Gastrocnemius medialis (tissue), 4 donors: ENCODE measurements at regions of chr22 and their contacts with region 1.

Region 1: GRCh38 chr22:40509401-40510134 is 127.0 kb downstream of the MRTFA start:
- DNase-seq: peak; percentile 29
- ATAC-seq: peak; percentile 32 to 45
- H3K4me3 ChIP-seq: no peak overlapping the region
- H3K27ac ChIP-seq: peak overlapping the region; percentile 68 to 78 (median 73)
- H3K4me1 ChIP-seq: peaks cover 56 to 59% of the 10 kb centered on the region in 2 donors
- H3K27me3 ChIP-seq: no peaks in the 10 kb centered on the region
- CTCF ChIP-seq: no peak
- POLR2A ChIP-seq: no peak

Region 2: DNA sequence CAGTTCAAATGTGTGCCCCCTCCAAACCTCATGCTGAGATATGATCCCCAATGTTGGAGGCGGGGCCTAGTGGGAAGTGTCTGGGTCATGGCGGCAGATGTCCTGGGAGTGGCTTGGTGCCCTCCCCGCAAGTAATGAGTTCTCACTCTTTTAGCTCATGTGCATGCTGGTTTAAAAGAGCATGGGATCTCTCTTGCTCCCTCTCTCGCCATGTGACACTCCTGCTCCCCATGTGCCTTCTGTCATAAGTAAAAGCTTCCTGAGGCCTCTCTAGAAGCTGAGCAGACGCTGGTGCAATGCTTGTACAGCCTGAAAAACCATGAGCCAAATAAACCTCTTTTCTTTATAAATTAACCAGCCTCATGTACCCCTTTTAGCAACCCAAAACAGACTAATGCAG is 40.4 kb before region 1 on chr22:
- in situ Hi-C with region 1: no loop called
- intact Hi-C with region 1: loop called (anchors 2 kb)
- DNase-seq: no peak
- ATAC-seq: no peak
- H3K4me3 ChIP-seq: no peak overlapping the region
- H3K27ac ChIP-seq: no peak overlapping the region
- H3K4me1 ChIP-seq: peaks cover 5 to 10% of the 10 kb centered on the region in 2 donors
- H3K27me3 ChIP-seq: no peaks in the 10 kb centered on the region
- CTCF ChIP-seq: no peak
- POLR2A ChIP-seq: no peak

Region 3: DNA sequence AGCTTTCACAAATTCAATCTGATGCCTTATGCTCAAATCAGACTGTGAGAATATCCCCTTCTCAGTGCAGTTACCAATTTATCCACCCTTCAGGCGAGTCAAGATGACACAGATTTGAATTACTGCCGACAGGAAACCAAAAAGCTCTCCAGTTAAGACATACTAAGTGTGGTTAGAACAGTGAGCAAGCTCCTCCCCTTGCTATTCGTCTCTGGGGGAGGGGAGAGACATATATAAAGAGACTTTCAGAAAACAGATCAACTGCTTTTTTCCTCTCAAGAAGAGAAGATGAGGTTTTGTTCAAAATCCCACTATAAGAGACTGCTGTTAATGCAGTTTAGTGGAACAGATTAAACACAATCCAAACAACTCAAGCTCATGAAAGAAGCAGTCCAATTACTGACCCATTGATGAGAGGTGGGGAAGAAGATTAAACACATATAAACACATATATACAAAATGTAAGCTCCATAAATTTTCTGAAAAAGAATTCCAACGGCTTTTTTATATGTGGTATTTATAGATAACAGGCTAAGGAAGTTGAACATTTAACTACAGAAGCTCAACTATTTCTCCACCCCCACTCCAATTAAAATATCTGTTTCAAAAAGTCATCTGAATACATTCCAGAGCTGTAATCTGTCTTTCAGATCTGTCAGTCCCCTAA is 24.3 kb after region 1 on chr22:
- in situ Hi-C with region 1: no loop called
- intact Hi-C with region 1: no loop called
- DNase-seq: no peak
- ATAC-seq: peak; percentile 65 to 70
- H3K4me3 ChIP-seq: peak overlapping the region in 3 of 4 donors; percentile 17 to 35 (median 19)
- H3K27ac ChIP-seq: peak overlapping the region; percentile 43 to 65 (median 50)
- H3K4me1 ChIP-seq: peaks cover 29 to 43% of the 10 kb centered on the region in 2 donors
- H3K27me3 ChIP-seq: no peaks in the 10 kb centered on the region
- CTCF ChIP-seq: no peak
- POLR2A ChIP-seq: no peak